ENCODE measurements at regions of chr20 and their contacts with region 1.

Region 1: DNA sequence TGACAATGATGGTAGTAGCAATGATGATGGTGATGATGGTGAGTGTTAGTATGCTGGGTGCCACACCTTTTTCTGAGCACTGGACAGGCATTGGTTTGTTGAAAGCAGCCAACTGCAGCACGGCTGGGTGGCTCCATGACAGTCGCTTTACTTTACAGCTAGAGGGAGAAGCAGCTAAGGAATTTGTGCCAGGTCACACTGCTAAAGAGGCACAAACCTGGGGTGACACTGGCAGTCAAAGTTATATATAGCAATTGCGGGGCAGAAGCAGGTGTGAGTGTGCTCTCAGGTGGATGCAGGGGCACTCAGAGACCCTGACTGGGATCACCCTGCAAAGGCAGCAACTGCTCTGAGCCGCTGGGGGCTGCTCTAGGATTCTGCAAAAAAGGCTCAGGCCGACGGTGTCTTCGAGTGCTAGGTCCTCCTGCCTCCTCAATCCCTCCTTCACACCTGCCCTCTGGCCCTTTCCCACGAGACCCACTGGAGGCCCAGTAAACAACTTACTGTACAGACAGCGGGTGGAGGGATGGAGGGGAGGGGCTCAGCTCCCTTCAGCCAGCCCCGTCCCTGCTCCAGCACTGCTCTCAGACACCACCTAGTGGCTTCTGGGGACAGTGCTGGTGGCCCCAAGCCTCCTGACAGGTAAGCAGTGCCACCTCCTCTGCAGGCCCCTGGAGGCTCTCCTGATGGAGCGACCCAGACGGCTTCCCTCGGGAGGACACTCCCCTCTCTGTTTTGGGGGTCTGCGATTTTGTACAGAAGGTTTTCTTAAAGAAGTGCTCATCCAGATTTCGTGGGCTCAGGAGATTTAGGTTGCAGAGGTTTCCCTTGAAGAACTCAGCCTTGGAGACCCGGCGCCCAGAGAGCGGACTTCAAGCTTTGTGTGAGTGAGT is 4.4 kb upstream of the RPS21 start:
- DNase-seq: peak; percentile 86
- CTCF ChIP-seq: peak; percentile 96

Region 2: DNA sequence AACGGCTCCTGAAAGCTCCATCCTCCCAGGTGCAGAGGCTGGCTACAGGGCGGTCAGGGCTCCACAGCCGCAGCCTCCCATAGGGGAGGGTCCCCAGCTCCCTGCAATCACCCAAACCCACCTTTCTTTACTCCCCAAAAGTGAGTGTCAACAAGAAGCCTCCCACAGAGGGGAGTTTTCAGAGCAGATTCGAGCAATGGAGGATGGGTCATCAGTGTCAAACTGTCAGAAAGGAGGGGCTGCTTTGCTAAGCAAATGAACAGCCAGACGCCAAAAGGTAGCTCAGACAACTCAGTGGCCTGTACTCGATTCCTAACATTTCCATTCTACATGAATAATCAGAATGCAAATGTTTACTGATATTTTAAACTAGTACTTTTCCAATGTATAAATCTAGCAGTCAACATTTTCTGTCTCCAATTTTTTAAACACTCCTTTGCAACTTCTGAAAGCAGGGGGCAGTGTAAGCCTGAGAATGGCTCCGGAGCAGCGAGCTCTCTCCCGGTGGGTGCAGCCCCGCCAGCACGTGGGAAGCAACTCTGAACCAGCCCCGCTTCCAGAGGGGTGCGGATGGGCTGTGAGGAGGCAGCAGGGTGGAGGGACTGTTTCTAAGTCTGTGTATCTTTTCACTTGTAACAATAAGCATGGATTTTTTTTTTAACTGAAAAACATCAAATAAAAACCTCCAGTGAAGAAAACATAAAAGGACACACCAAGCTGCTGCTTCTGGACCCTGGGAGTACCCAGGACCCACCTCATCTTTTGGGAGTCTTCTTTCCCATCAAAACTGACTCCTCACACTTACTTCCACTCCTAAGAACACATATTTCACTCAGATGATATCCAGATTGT is 371.8 kb before region 1 on chr20:
- CTCF ChIA-PET with region 1: interaction called, 17 read pairs
- POLR2A ChIA-PET with region 1: no interaction called
- DNase-seq: peak; percentile 80
- CTCF ChIP-seq: peak; percentile 67

Region 3: DNA sequence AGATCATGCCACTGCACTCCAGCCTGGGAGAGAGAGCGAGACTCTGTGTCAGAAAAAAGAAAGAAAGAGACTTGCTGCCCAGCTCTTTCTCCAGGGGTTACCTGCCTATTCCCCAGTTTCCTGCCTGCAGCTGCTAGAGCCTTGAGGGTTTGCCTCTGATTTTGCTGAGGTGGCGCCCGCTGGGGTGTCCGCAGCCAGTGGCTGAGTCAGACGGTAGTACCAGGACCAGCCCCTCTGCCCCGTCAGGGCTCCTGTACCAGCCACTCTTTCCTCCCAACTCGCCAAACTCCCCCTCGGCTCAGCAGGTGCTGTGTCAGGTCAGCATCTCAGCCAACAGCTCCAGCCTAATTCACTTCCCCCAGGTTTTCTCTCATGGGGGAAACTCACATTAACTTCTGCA is 267.7 kb before region 1 on chr20:
- CTCF ChIA-PET with region 1: no interaction called
- POLR2A ChIA-PET with region 1: no interaction called
- DNase-seq: no peak
- CTCF ChIP-seq: no peak

Region 4: DNA sequence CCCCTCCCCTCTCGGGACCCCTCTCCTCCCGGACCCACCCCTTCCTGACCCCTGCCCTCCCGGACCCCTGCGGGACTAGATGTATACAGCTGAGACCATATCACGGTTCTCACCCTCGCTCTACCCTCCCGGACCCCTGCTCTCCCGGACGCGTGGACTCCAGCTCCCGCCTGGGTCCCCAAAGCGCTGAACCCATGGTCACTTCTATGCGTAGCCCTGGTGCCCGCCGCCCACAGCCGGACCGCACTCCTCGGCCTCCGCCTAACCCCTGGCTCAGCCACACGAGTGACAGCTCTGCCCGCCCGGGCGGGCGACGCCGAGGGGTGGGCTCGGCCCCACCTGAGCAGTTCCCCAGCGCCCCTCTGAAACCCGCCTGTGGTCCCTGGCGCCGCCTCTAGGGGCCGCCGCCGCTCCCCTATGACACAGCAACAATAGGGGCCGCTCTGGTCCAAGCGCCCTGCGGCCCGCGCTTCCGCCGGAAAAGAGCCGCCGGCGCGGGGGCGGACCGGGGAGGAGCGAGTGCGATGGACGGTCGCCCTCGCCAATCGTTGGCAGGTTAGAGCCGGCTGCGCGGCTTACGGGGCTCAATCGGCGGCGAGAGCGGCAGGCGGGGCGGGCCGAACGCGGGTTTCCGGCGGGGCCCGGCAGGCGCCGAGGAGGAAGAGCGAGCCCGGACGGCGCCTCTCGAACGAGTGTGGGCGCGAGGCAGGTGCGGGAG is 80.1 kb before region 1 on chr20 and contains the start of gene ADRM1:
- CTCF ChIA-PET with region 1: interaction called, 40 read pairs
- POLR2A ChIA-PET with region 1: interaction called, 6 read pairs
- DNase-seq: peak; percentile 99
- CTCF ChIP-seq: peak; percentile 87

Region 5: DNA sequence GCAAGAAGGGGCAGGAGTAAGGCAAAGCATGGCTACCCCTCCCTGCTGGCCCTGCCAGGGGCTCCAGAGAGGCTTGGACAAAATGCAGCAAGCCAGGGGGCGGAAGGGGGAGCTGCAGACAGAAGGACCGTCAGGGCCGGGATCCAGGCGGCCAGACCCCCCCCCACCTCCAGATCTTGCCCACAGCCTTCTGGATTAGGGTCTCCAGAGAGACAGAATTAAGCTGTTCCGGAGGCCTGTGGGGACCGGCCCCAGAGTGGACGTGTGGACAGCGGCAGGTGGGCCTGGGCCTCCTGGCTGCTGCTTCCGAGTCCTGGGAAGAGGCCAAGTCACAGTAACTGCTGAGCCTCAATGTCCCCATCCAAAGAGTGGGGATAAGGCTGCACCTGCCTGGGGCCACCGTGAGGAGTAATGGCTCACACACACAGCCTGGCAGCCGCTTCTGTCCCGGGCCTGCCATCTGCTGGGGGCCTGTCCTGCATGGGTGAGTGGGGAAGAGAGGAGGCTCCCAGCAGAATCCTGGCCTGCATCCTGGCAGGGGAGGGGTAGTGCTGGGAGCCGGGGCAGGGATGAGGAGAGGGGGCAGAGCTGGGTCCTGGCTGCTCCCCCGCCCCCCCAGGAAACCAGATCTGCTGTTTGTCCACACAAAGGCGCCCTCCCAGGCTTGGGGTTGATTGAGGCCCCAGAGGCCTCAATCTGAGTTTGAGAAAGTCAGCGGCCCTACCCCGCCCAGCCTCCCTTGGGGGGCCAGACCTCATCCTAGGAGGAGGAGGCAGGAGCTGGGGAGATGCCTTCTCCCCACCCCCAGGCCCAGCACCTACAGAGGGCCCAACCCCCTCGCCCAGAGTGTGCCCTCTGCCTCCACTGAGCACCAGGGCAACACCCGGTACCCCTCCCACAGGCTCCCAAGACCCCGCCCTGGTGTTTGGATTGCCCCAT is 19.3 kb before region 1 on chr20:
- CTCF ChIA-PET with region 1: interaction called, 22 read pairs
- POLR2A ChIA-PET with region 1: interaction called, 3 read pairs
- DNase-seq: no peak
- CTCF ChIP-seq: peak; percentile 24

Region 6: GRCh38 chr20:62395311-62396242 is 13.0 kb after region 1 on chr20:
- CTCF ChIA-PET with region 1: interaction called, 12 read pairs
- POLR2A ChIA-PET with region 1: interaction called, 4 read pairs
- DNase-seq: no peak
- CTCF ChIP-seq: no peak

Region 7: GRCh38 chr20:62409931-62410745 is 27.6 kb after region 1 on chr20:
- CTCF ChIA-PET with region 1: interaction called, 12 read pairs
- POLR2A ChIA-PET with region 1: interaction called, 3 read pairs
- DNase-seq: peak; percentile 62
- CTCF ChIP-seq: peak; percentile 65

Region 8: DNA sequence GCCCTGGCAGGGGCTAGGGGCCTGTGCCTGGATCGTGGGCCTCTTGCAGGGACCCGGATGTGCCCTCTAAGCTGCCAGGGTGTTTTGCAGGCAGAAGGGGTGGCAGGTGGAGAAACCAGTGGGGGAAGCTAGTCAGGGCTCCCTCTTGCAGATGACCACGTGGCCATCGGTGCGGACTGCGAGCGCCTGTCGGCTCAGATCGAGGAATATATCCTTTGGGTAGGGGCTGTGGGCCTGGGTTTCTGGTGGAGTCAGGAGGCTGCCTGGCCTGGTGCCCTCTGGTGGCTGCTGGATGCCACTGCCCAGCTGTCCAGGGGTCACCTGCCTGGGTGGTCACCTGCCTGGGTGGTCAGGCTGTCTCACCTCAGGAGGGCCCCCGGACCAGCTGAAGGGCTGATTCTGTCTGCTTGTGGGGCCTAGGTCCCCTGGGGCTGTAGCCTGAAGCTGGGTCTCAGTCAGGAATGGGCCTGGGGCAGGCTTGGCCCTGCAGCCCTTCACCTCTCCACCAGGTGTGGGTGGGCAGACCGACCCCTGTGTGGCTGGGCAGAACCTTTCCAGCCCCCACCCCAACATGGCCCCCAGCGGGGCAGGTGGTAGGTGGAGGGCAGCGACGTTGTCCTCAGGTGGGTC is 1687.2 kb after region 1 on chr20:
- CTCF ChIA-PET with region 1: no interaction called
- POLR2A ChIA-PET with region 1: no interaction called
- DNase-seq: peak; percentile 59
- CTCF ChIP-seq: peak; percentile 71